ENCODE measurements at regions of chr12 and their contacts with region 1.

Region 1: DNA sequence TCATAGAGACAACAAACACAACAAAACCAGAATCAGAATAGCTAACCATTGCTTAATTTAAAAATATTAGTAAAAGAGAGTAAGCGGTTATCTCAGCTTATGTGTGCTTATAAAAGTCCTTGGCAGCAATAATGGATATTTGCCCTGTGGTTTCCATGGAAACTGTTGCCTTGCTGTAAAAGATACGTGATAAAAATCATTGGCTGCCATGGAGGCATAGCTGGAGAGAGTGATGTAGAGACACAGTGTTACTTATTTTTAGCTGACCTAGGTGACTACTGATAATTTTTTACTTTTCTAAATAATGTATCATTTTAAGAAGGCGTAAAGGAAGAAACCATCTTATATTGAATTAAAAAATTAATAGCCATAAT is 92.9 kb downstream of the ERC1 start:
- DNase-seq: peak; percentile 53
- H3K4me3 ChIP-seq: no peak overlapping the region
- H3K27ac ChIP-seq: peak overlapping the region in 1 of 2 donors; percentile 55
- H3K4me1 ChIP-seq: no peaks in the 10 kb centered on the region
- H3K27me3 ChIP-seq: no peaks in the 10 kb centered on the region
- CTCF ChIP-seq: no peak
- POLR2A ChIP-seq: no peak

Region 2: DNA sequence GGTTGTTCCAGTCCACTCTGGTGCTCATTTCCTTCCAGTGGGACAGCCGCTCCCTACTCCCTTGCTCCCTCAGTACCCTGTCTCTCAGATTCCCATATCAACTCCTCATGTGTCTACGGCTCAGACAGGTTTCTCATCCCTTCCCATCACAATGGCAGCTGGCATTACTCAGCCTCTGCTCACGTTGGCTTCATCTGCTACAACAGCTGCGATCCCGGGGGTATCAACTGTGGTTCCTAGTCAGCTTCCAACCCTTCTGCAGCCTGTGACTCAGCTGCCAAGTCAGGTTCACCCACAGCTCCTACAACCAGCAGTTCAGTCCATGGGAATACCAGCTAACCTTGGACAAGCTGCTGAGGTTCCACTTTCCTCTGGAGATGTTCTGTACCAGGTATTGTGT is 204.2 kb before region 1 on chr12:
- intact Hi-C with region 1: no loop called
- DNase-seq: no peak
- H3K4me3 ChIP-seq: no peak overlapping the region
- H3K27ac ChIP-seq: no peak overlapping the region
- H3K4me1 ChIP-seq: no peaks in the 10 kb centered on the region
- H3K27me3 ChIP-seq: no peaks in the 10 kb centered on the region
- CTCF ChIP-seq: no peak
- POLR2A ChIP-seq: no peak

Region 3: GRCh38 chr12:990661-991349 is 93.1 kb before region 1 on chr12 and contains the start of gene ERC1:
- intact Hi-C with region 1: loop called (anchors 5 kb)
- DNase-seq: peak; percentile 86
- H3K4me3 ChIP-seq: peak within 1 kb of the TSS; percentile 97 to 98
- H3K27ac ChIP-seq: peak within 1 kb of the TSS; percentile 98 to 99
- H3K4me1 ChIP-seq: peaks cover 10% of the 10 kb centered on the region
- H3K27me3 ChIP-seq: no peaks in the 10 kb centered on the region
- CTCF ChIP-seq: no peak
- POLR2A ChIP-seq: peak; percentile 65
- total RNA-seq, gene ERC1: 18.9 to 72.9 TPM

Measured in prostate gland (tissue), 2 donors.